Breast epithelium (tissue), 4 donors: ENCODE measurements at regions of chr19 and their contacts with region 1.

Region 1: DNA sequence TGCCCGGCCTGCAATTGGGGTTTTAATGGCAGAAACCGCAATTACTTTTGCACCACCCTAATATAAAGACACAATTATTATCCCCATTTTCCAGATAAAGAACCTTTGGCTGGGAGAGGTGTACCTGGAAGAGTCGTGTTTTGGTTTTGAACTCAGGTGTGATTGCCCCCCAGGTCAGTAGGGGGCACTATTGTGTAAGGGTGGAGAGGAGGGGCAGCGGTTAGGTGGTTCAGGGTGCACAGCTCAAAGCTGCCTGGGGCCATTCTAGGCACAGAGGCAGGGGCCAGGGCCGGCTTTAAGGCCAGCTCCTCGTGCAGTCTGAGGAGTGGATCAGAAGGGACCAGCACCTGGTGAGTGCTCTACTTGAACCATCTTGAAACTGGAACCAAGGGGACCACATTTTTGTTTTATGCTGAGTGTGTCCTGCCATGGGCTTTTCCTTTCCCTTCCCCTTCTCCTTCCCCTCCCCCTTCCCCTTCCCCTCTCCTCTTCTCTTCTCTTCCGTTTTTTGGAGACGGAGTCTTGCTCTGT is 5.8 kb upstream of the FCGRT start:
- DNase-seq: no peak
- H3K4me3 ChIP-seq: no peak overlapping the region
- H3K27ac ChIP-seq: no peak overlapping the region
- H3K4me1 ChIP-seq: no peaks in the 10 kb centered on the region
- H3K27me3 ChIP-seq: no peaks in the 10 kb centered on the region
- CTCF ChIP-seq: peak; percentile 42 to 75 (median 61)
- POLR2A ChIP-seq: no peak

Region 2: GRCh38 chr19:49064768-49065611 is 441.6 kb before region 1 on chr19 and contains the start of gene NTF4:
- intact Hi-C with region 1: loop called (anchors 5 kb)
- DNase-seq: peak in 1 of 2 donors; percentile 52
- H3K4me3 ChIP-seq: peak within 1 kb of the TSS in 2 of 3 donors; percentile 50 to 67
- H3K27ac ChIP-seq: peak within 1 kb of the TSS; percentile 81 to 84
- H3K4me1 ChIP-seq: no peaks in the 10 kb centered on the region
- H3K27me3 ChIP-seq: peaks cover 0 to 15% of the 10 kb centered on the region in 2 donors
- CTCF ChIP-seq: no peak
- POLR2A ChIP-seq: no peak
- total RNA-seq, gene NTF4: 3.9 to 6.4 TPM in 2 of 3 donors, not detected in the other

Region 3: DNA sequence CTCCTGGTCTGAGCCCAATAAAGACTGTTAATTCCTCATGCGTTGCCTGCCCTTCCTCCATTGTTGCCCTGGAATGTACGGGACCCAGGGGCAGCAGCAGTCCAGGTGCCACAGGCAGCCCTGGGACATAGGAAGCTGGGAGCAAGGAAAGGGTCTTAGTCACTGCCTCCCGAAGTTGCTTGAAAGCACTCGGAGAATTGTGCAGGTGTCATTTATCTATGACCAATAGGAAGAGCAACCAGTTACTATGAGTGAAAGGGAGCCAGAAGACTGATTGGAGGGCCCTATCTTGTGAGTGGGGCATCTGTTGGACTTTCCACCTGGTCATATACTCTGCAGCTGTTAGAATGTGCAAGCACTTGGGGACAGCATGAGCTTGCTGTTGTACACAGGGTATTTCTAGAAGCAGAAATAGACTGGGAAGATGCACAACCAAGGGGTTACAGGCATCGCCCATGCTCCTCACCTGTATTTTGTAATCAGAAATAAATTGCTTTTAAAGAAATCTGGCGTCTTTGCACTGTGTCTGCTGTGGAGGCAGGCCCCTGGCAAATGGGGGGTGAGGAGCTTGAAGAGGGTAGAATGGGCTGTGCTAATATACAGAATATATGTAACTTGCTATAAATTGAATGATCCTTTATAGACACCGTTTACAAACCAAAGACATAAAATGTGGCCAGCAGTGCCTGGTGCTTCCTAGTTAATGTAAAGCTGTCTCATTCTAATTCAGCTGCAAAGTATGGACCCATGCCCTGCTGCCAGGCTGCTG is 14.7 kb before region 1 on chr19:
- intact Hi-C with region 1: loop called (anchors 1 kb)
- DNase-seq: no peak
- H3K4me3 ChIP-seq: no peak overlapping the region
- H3K27ac ChIP-seq: no peak overlapping the region
- H3K4me1 ChIP-seq: peaks cover 0 to 12% of the 10 kb centered on the region in 2 donors
- H3K27me3 ChIP-seq: no peaks in the 10 kb centered on the region
- CTCF ChIP-seq: no peak
- POLR2A ChIP-seq: no peak

Region 4: DNA sequence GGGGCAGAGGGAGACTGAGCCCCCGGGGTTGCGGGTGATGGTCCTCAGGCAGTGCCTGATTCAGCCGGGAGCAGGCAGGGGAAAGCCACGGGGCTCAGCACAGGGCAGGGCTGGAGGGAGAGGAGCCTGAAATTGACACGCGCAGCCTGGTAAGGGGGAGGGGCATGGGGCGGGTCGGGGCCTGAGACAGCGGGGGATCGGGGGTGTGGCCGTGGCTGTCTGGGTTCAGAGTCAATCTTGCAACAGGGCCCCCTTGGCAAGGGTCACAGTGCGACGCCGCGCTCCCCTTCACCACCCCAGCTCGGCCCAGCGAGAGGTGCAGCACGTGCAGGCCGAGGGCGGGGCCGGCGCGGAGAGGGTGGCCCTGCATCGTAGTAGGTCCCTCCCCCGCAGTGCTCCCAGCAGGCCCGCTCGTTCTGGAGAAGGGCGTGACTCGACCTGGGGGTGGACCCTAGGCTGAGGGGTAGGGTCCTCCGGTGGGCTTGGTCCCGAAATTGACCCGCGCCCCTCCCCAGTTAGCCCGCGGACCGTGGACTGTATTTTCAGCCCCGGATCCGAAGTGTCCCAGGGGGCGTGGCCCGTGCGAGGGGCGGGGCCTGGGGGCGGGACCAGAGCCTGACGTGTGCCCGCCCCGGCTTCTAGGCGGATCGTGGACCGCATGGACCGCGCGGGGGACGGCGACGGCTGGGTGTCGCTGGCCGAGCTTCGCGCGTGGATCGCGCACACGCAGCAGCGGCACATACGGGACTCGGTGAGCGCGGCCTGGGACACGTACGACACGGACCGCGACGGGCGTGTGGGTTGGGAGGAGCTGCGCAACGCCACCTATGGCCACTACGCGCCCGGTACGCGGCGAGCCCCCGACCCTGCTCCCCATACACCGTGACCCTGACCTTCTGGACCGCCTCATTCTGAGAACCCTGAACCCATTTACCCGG is 27.2 kb after region 1 on chr19:
- intact Hi-C with region 1: loop called (anchors 1 kb)
- DNase-seq: peak; percentile 63 to 75
- H3K4me3 ChIP-seq: peak overlapping the region; percentile 46 to 67 (median 63)
- H3K27ac ChIP-seq: no peak overlapping the region
- H3K4me1 ChIP-seq: peaks cover 0 to 3% of the 10 kb centered on the region in 2 donors
- H3K27me3 ChIP-seq: no peaks in the 10 kb centered on the region
- CTCF ChIP-seq: peak in 2 of 3 donors; percentile 20 to 50
- POLR2A ChIP-seq: no peak